ENCODE measurements at regions of chr11 and their contacts with region 1.

Region 1: DNA sequence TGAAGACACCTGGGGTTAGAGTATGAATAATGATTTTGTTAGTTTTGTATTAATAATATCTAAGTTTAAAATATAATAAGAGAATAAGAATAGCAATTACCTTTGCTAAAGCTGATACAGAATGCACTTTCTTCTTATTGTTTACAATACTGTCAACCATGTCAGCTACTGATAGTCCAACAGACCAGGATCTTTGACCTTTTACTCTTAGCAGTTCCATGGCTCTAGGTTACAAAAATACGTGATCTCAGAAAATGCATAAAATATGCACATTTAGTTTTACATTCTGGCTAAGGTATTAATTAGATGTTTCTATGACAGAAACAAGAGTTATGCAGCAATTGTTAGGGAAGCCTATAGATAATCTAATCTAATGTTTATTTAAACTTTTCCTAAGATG is 7.5 kb upstream of the TSG101 start:
- DNase-seq: no peak
- ATAC-seq: no peak
- H3K4me3 ChIP-seq: no peak overlapping the region
- H3K27ac ChIP-seq: no peak overlapping the region
- H3K4me1 ChIP-seq: peaks cover 14% of the 10 kb centered on the region
- H3K27me3 ChIP-seq: no peaks in the 10 kb centered on the region
- CTCF ChIP-seq: no peak

Region 2: GRCh38 chr11:18522381-18522780 is 11.8 kb before region 1 on chr11:
- CTCF ChIA-PET with region 1: no interaction called
- POLR2A ChIA-PET with region 1: no interaction called
- intact Hi-C with region 1: no loop called
- DNase-seq: no peak
- ATAC-seq: no peak
- H3K4me3 ChIP-seq: no peak overlapping the region
- H3K27ac ChIP-seq: no peak overlapping the region
- H3K4me1 ChIP-seq: peaks cover 14% of the 10 kb centered on the region; the same call in 1 of the 2 replicates
- H3K27me3 ChIP-seq: no peaks in the 10 kb centered on the region
- CTCF ChIP-seq: no peak

Region 3: GRCh38 chr11:18578975-18579598 is 44.9 kb after region 1 on chr11:
- CTCF ChIA-PET with region 1: no interaction called
- POLR2A ChIA-PET with region 1: no interaction called
- intact Hi-C with region 1: loop called (anchors 5 kb)
- DNase-seq: peak; percentile 82
- ATAC-seq: peak; percentile 90
- H3K4me3 ChIP-seq: peak overlapping the region; percentile 45
- H3K27ac ChIP-seq: peak overlapping the region; percentile 76
- H3K4me1 ChIP-seq: peaks cover 22% of the 10 kb centered on the region; the same call in 1 of the 2 replicates
- H3K27me3 ChIP-seq: no peaks in the 10 kb centered on the region
- CTCF ChIP-seq: no peak

Measured in PC-3 (cell line).